Activated B cell treated with CpG ODN at 0.5 μM for 24 hours (primary cell): ENCODE measurements at regions of chr12 and their contacts with region 1.

Region 1: DNA sequence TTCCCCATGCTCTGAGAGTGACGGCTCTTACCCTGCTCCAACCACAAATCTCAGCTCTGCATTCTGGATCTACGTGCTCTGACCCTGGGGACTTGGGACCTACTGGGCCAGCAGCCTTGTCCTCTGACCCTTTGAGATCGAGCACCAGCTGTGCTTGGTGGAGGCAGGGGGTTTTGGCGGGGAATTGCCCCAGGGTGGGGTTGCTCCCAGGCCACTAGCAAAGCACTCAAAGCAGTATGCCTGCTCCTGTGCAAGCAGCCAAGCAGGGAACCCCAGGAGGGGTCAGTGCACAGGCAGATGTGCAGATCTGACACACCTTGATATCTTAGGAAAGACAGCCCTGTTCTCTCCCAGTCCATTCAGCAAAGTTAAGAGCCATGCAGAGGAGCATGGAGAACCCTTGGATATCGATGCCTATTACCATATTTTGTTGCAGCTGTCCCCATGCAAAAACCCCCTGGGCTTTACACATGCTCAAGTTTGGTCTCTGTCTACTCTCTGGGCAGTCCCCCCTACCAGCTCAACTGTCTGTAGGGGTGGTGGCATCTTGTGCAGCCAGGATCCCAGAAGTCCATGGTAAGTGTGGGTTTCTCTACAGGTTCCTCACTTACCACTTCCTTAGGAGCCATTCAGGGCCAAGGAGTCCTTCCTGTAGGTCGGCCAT is 319.0 kb downstream of the TMTC2 start:
- DNase-seq: no peak
- ATAC-seq: no peak
- H3K4me3 Mint-ChIP-seq: no peak overlapping the region
- H3K27ac Mint-ChIP-seq: no peak overlapping the region
- H3K4me1 Mint-ChIP-seq: no peaks in the 10 kb centered on the region
- H3K27me3 Mint-ChIP-seq: no peaks in the 10 kb centered on the region
- CTCF ChIP-seq: no peak

Region 2: DNA sequence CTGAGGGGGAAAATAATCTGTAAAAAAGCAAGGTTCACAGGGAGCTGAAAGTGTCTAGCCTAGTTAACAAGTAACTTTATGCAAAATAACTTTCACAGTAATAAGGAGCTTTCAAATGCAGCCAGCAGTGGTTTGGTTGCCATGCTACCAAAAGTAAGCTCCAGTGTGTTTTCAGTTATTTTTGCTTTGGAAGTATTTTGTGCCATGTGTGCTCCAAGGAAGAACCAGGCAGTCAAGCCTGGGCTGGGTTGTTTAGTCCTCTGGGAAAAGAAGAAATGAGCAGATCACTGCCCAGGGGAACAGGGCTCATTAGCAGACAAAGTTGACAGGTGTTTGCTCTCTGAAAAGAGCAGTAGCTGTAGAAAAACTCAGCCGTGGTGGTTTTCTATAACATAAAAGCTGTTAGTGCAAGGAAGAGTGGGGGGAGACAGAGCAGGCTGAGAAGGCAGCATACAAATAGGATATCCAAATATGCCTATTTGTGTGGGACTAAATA is 411.7 kb before region 1 on chr12:
- CTCF ChIA-PET with region 1: no interaction called
- POLR2A ChIA-PET with region 1: no interaction called
- intact Hi-C with region 1: no loop called
- DNase-seq: no peak
- ATAC-seq: no peak
- H3K4me3 Mint-ChIP-seq: no peak overlapping the region
- H3K27ac Mint-ChIP-seq: no peak overlapping the region
- H3K4me1 Mint-ChIP-seq: no peaks in the 10 kb centered on the region
- H3K27me3 Mint-ChIP-seq: no peaks in the 10 kb centered on the region
- CTCF ChIP-seq: no peak

Region 3: GRCh38 chr12:84842406-84843013 is 1836.8 kb after region 1 on chr12:
- CTCF ChIA-PET with region 1: no interaction called
- POLR2A ChIA-PET with region 1: no interaction called
- intact Hi-C with region 1: loop called (anchors 10 kb)
- DNase-seq: no peak
- ATAC-seq: no peak
- H3K4me3 Mint-ChIP-seq: no peak overlapping the region
- H3K27ac Mint-ChIP-seq: no peak overlapping the region
- H3K4me1 Mint-ChIP-seq: no peaks in the 10 kb centered on the region
- H3K27me3 Mint-ChIP-seq: no peaks in the 10 kb centered on the region
- CTCF ChIP-seq: no peak